Uterus (tissue), 4 donors: ENCODE measurements at regions of chr19 and their contacts with region 1.

Region 1: DNA sequence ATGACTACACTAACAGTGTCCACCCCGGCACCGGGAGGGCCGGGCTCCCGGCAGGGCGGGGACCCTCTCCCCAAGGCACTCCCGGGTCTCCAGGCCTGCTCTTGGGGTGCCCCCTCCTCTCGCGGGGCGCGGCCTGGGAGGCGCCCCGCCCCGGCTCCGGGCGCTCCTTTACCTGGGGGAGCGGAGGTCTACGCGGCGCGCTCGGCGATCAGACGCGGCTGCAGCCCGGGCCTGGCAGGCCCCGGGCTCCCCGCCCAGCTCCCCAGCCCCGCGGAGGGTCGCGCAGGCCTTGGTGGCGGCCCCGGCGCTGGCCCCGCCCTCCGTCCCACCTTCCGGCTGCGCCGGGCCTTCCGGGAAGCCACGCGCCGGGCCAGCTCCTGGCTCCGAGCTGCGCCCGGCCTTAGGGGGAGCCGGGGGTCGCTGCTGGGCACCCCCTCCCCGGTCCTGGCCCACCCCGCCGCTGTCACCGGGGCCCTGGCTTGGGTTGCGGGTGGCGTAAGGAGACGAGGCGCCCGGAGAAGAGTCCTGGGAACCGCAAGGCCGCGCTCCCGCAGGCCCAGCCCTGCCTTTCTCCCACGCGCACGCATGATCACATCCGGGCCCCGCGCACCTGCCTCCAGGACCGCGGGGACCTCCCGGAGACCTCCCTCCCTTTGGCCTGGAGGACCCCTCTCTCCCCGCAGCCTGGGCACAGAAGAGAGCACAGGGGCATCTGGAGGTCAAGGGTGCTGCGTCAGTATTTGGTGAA is at the start of gene C19orf12:
- DNase-seq: peak; percentile 47 to 69
- H3K4me3 ChIP-seq: peak within 1 kb of the TSS; percentile 52 to 92
- H3K27ac ChIP-seq: peak within 1 kb of the TSS; percentile 88 to 92
- H3K4me1 ChIP-seq: peaks cover 0 to 6% of the 10 kb centered on the region in 2 donors
- H3K27me3 ChIP-seq: no peaks in the 10 kb centered on the region
- CTCF ChIP-seq: no peak
- POLR2A ChIP-seq: peak; percentile 57 to 77
- total RNA-seq, gene C19orf12: 8.5 to 35.0 (median 31.5) TPM

Region 2: GRCh38 chr19:29528350-29528945 is 186.7 kb before region 1 on chr19:
- intact Hi-C with region 1: no loop called
- DNase-seq: peak in 1 of 2 donors; percentile 59
- H3K4me3 ChIP-seq: no peak overlapping the region
- H3K27ac ChIP-seq: no peak overlapping the region
- H3K4me1 ChIP-seq: peaks cover 0 to 39% of the 10 kb centered on the region in 2 donors
- H3K27me3 ChIP-seq: peaks cover 3 to 22% of the 10 kb centered on the region in 2 donors
- CTCF ChIP-seq: peak; percentile 63 to 73 (median 72)
- POLR2A ChIP-seq: no peak

Region 3: GRCh38 chr19:29610563-29611271 is 104.4 kb before region 1 on chr19:
- intact Hi-C with region 1: loop called (anchors 5 kb)
- DNase-seq: peak; percentile 84 to 86
- H3K4me3 ChIP-seq: no peak overlapping the region
- H3K27ac ChIP-seq: no peak overlapping the region
- H3K4me1 ChIP-seq: peaks cover 0 to 5% of the 10 kb centered on the region in 2 donors
- H3K27me3 ChIP-seq: no peaks in the 10 kb centered on the region
- CTCF ChIP-seq: peak; percentile 84 to 91 (median 88)
- POLR2A ChIP-seq: no peak